ENCODE measurements at regions of chr7 and their contacts with region 1.

Region 1: GRCh38 chr7:134761266-134761665 is 18.2 kb upstream of the CALD1 start:
- DNase-seq: no peak
- ATAC-seq: no peak

Region 2: DNA sequence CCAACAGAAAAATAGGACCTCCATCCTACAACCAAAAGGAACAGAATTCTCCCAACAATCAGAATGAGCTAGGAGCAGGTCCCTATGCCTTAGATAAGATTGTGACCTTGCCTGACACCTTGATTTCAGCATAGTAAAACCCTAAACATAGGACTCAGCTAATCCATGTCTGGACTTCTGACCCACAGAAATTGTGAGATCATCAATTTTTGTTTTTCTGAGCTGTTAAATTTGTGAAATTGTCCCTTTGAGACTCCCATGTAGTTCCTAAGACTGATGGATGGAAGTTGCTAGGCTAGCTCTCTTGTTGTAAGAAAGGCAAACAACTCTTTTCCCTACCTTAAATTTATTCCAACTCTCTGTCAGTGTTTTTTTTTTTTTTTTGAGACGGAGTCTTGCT is 1264.2 kb before region 1 on chr7:
- intact Hi-C with region 1: loop called (anchors 5 kb)
- DNase-seq: no peak
- ATAC-seq: no peak

Measured in sciatic nerve (tissue), 2 donors.